Activated naive CD4-positive, alpha-beta T cell treated with anti-CD3 and anti-CD28 coated beads for 36 hours (primary cell): ENCODE measurements at regions of chr2 and their contacts with region 1.

Region 1: DNA sequence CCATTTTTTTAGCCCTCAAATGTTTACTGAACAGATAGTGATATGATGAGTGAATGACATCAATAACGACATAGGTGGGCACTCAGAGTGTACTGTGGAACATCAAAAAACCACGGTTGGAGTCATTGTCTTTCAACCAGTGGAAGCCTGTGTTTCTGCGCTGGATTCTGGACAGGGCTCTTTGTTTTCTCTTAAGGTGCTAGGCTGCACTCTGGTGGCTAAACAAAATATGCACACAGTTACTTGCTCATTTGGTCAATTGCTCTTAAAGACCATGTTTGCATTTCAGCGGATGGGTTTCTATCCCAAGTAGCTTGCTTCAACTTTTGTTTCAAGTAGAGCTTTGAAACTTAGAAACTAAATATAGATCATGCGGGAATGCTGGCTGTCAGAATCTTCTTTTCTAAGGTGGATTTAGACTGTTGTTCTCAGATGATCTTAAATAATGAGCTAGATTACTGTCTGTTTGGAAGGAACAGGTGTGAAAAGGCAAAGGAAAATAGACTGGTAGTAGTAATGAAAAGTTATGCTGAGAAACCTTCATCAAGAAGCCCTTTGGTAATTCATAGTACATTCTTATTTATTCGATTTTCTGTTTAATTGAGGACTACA is 48.5 kb upstream of the LYPD6B start:
- DNase-seq: peak; percentile 70
- H3K4me3 Mint-ChIP-seq: no peak overlapping the region
- H3K27ac Mint-ChIP-seq: no peak overlapping the region
- H3K4me1 Mint-ChIP-seq: no peaks in the 10 kb centered on the region
- H3K27me3 Mint-ChIP-seq: no peaks in the 10 kb centered on the region

Region 2: GRCh38 chr2:147937744-147938349 is 1052.1 kb before region 1 on chr2:
- CTCF ChIA-PET with region 1: no interaction called
- intact Hi-C with region 1: loop called (anchors 1 kb)
- DNase-seq: no peak
- H3K4me3 Mint-ChIP-seq: no peak overlapping the region
- H3K27ac Mint-ChIP-seq: no peak overlapping the region
- H3K4me1 Mint-ChIP-seq: no peaks in the 10 kb centered on the region
- H3K27me3 Mint-ChIP-seq: no peaks in the 10 kb centered on the region

Region 3: DNA sequence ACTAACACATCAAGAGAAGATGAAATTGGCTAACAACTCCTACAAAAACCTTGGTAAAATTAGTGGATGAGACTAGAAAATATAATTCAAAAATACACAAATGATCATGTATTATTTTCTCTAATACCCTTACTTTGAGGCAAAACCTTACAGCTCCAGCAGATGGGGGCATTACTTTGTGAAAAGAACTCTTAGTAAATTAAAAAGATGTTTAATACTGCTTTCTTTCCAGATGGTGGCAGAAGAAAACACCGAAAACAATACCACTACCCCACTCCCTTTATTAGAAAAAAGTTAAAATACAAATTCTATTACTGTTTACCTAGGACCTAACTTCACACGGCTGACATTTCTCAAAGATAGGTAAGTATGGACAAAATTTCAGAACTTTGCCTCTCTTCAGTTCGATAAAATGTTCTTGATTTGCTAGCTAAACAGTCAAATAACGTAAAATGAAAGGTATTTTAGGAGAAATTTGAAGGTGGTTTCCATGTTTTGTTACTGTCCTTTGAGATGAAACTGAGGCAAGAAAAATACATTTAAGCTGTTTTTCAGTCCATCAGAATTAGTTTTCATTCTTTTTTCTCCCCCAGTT is 1000.1 kb before region 1 on chr2:
- CTCF ChIA-PET with region 1: no interaction called
- intact Hi-C with region 1: loop called (anchors 1 kb)
- DNase-seq: peak; percentile 40
- H3K4me3 Mint-ChIP-seq: no peak overlapping the region
- H3K27ac Mint-ChIP-seq: no peak overlapping the region
- H3K4me1 Mint-ChIP-seq: peaks cover 20% of the 10 kb centered on the region
- H3K27me3 Mint-ChIP-seq: no peaks in the 10 kb centered on the region

Region 4: GRCh38 chr2:148565272-148565894 is 424.6 kb before region 1 on chr2:
- CTCF ChIA-PET with region 1: no interaction called
- intact Hi-C with region 1: loop called (anchors 1 kb)
- DNase-seq: no peak
- H3K4me3 Mint-ChIP-seq: no peak overlapping the region
- H3K27ac Mint-ChIP-seq: no peak overlapping the region
- H3K4me1 Mint-ChIP-seq: peaks cover 5% of the 10 kb centered on the region
- H3K27me3 Mint-ChIP-seq: no peaks in the 10 kb centered on the region

Region 5: GRCh38 chr2:148781544-148781943 is 208.4 kb before region 1 on chr2:
- CTCF ChIA-PET with region 1: no interaction called
- intact Hi-C with region 1: loop called (anchors 5 kb)
- DNase-seq: no peak
- H3K4me3 Mint-ChIP-seq: no peak overlapping the region
- H3K27ac Mint-ChIP-seq: no peak overlapping the region
- H3K4me1 Mint-ChIP-seq: peaks cover 5% of the 10 kb centered on the region
- H3K27me3 Mint-ChIP-seq: no peaks in the 10 kb centered on the region

Region 6: GRCh38 chr2:148926291-148926961 is 63.6 kb before region 1 on chr2:
- CTCF ChIA-PET with region 1: interaction called, 3 read pairs
- intact Hi-C with region 1: loop called (anchors 2 kb)
- DNase-seq: peak; percentile 67
- H3K4me3 Mint-ChIP-seq: peak overlapping the region; percentile 76
- H3K27ac Mint-ChIP-seq: peak overlapping the region; percentile 37
- H3K4me1 Mint-ChIP-seq: peaks cover 14% of the 10 kb centered on the region
- H3K27me3 Mint-ChIP-seq: no peaks in the 10 kb centered on the region

Region 7: GRCh38 chr2:149375801-149376361 is 385.9 kb after region 1 on chr2:
- CTCF ChIA-PET with region 1: no interaction called
- intact Hi-C with region 1: no loop called
- DNase-seq: no peak
- H3K4me3 Mint-ChIP-seq: no peak overlapping the region
- H3K27ac Mint-ChIP-seq: no peak overlapping the region
- H3K4me1 Mint-ChIP-seq: no peaks in the 10 kb centered on the region
- H3K27me3 Mint-ChIP-seq: peaks cover 2% of the 10 kb centered on the region